Head of caudate nucleus (tissue), 42 donors: ENCODE measurements at regions of chr17 and their contacts with region 1.

Region 1: DNA sequence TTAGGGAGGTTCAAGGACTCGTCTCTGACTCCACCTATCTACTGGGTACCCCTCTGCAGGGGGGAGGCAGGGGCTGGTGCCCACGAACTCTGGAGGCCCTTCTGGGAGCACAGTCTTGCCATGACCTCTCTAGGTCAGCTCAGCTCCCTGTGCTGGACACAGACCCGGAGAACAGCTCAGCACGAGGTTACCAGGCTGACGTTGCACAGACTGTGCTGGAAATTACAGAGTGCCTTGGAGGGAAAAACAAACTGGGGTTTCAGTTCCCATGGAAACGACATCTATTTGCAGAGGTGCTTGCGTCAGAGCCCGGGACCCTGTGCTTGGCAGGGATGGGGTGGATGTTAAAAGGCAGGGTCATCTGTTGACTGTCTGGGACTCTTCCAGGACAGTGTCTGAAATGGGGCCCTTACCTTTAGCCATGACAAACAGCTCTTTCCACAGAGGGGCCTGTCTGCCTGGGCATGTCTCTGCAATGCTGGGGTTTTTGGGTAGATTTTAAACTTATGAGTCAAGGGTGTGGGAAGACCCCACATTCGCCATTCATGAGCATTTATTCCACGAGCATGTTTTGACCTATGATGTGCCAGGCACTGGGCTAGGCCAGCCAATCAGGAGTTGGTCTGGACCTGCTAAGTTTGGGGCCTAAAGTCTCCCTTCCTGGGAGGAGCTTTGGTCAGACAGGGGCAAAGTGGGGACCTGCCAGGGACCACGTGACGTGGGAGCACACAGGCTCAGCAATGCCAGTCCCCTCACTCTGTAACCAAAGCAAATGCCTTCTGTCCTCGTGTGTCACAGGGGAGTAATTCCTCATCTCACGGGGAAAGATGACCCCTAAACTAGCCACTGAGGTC is 22.5 kb downstream of the CCR7 start:
- DNase-seq: peak in 6 of 42 donors; percentile 6 to 49 (median 30)

Region 2: GRCh38 chr17:40417609-40418427 is 125.0 kb before region 1 on chr17 and contains the start of gene TOP2A:
- intact Hi-C with region 1: loop called (anchors 10 kb)
- DNase-seq: peak; percentile 81 to 100 (median 97)

Region 3: DNA sequence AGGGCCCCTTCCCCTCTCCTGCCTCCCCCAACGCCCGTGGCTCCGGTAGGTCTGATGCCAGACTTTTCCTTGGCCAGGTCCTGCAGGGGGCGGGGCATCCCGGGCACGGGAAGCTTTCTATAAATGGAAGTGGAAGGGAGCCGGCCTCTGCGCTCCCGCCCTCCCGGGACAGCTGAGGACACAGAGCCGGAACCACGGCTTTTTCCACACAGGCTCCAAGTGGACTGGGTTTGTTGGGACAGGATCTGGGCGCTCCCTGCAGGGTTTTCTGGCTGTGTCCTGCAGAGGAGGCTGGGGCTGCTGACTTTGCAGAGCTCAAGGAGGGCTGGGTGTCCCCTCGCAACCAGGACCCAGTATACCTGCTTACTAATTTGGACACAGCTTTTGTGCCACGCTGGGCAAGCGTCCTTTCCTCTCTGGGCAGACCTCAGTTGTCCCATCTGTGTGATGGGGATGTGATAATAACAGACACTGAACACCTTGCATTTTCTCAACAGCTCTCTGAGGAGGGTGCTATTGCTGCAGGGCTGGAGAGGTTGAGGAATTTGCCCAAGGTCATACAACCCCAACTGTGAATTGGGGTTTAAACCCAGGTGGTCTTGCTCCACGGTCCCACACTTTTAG is 43.1 kb before region 1 on chr17:
- intact Hi-C with region 1: loop called (anchors 10 kb)
- DNase-seq: peak in 39 of 42 donors; percentile 5 to 78 (median 45)

Region 4: DNA sequence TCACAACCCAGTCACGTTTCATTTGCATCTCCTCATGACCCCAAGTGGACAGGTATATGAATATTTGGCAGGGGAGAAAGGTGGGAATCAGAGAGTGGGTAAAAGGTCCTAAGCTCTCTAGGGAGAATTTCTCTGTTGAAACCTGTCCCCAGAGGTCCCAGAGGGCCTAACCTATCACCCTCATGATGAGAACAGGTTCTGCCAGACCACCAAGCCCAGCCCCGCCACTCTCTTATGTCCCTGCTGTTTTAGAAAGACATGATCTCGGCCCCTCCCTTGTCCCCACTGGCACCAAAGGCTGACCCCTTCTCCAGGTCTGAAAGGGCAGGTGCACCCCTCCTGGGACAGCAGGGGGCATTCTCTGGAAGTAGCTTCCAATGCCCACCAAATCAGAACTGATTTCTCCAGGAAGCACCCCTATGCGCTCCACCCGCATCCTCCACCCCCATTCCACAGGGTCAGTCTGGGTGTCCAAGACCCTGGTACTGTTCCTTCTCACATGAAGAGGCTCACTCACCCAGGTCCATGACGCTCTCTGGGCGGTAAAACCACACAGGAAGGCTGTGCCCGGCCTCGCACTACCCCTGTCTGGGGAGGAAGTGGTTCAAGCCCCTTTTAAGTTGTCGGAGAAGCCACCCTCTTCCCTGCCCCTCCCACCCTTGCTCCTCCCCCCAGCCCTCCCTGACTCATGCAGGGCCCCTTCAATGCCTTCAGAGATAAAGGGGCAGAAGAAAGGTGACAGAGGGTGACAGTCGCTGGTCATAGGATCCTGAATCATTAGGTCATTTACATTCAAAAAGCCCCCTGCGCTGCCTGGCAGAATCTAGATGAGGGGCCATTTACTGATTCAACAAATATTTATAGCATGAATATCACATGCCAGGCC is 22.3 kb after region 1 on chr17 and contains the start of gene CCR7:
- intact Hi-C with region 1: no loop called
- DNase-seq: no peak